ENCODE measurements at regions of chr1 and their contacts with region 1.

Region 1: DNA sequence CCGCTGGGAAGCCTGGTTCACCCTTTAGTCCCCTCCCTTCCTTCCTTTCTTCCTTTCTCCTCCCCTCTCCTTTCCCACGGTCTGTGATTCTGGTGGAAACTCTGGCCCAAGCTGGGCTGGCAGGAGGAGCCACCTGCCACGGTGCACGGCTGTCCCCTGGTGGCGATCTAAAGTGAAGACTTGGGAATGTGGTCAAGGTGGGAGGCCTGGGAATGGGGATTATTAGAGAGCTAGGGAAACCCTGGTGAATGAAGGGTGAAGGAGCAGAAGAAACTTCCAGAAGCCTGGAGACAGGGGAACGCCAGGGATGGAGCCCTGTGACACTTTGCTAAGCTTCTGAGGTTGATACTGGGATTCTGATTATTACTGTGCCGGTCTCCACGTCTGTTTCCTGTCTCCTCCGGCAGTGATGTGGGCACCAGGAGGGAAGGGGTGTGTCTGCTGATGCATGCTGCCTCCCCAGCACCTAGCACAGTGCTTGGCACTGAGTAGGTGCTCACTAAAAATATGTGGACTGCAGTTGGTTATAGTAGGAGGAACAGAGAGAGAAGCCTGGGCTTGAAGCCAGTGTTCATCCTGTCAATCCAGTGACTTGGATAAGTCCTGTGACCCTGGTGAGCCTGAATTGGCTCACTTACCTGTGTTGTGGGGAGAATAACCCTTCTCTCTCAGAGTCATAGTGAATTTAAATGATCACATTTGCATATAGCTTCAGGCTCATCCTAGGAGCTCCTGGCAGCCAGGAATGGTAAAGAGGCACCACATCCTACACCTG is 71.2 kb upstream of the NBPF3 start:
- DNase-seq: peak; percentile 70 to 94
- H3K4me3 ChIP-seq: no peak overlapping the region
- CTCF ChIP-seq: peak in 2 of 3 donors; percentile 68 to 98
- POLR2A ChIP-seq: no peak

Region 2: GRCh38 chr1:21232044-21232443 is 136.7 kb before region 1 on chr1:
- intact Hi-C with region 1: loop called (anchors 5 kb)
- DNase-seq: peak in 1 of 2 donors; percentile 53
- H3K4me3 ChIP-seq: no peak overlapping the region
- CTCF ChIP-seq: peak in 1 of 3 donors; percentile 64
- POLR2A ChIP-seq: no peak